ENCODE measurements at regions of chr6 and their contacts with region 1.

Region 1: DNA sequence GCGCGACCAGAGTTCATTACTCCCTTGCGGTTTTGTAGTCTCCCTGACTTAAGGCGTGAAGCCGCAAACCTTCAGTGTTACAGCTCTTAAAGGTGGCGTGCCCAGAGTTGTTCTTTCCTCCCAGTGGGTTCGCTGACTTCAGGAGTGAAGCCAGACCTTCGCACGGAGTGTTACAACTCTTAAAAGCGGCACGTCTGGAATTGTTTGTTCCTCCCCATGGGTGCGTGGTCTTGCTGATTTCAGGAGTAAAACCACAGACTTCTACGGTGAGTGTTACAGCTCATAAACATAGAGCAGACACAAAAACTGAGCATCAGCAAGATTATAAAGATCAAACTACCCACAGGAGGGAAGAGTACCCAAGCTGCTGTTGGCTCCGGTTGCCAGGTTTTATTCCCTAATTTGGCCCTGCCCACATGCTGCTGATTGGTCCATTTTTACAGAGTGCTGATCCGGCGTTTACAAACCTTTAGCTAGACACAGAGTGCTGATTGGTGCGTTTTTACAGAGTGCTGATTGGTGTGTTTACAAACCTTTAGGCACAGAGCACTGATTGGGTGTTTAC is 10.4 kb downstream of the TMEM14C start:
- DNase-seq: peak in 1 of 2 experiments; percentile 35
- H3K4me3 ChIP-seq: no peak overlapping the region
- H3K27ac ChIP-seq: no peak overlapping the region
- H3K4me1 ChIP-seq: no peaks in the 10 kb centered on the region
- H3K27me3 ChIP-seq: no peaks in the 10 kb centered on the region
- CTCF ChIP-seq: no peak
- EP300 ChIP-seq: no peak
- POLR2A ChIP-seq: no peak
- RAD21 ChIP-seq: no peak

Region 2: DNA sequence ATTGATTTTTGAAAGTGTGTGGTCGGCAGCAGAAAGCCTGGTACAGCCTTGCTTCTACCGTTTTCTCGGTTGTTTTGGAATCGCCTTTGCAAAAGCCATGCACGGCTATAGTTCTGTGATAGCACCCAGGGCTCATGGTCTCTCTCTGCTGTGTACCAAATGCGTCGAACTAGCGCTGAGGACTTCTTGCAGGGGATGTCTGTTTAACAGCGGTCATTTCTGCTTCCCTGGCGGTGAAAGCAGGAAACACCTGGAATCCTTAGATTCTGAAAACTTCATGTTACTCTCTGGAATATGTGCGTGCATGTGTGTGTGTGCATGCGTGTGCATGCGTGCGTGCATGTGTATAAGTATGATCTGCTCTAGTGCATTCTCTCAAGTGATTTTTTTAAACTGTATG is 238.2 kb before region 1 on chr6:
- CTCF ChIA-PET with region 1: no interaction called
- POLR2A ChIA-PET with region 1: no interaction called
- DNase-seq: no peak
- H3K4me3 ChIP-seq: no peak overlapping the region
- H3K27ac ChIP-seq: no peak overlapping the region
- H3K4me1 ChIP-seq: no peaks in the 10 kb centered on the region
- H3K27me3 ChIP-seq: no peaks in the 10 kb centered on the region; a peak in 1 of 7 replicates
- CTCF ChIP-seq: no peak
- EP300 ChIP-seq: no peak
- POLR2A ChIP-seq: no peak
- RAD21 ChIP-seq: no peak

Region 3: DNA sequence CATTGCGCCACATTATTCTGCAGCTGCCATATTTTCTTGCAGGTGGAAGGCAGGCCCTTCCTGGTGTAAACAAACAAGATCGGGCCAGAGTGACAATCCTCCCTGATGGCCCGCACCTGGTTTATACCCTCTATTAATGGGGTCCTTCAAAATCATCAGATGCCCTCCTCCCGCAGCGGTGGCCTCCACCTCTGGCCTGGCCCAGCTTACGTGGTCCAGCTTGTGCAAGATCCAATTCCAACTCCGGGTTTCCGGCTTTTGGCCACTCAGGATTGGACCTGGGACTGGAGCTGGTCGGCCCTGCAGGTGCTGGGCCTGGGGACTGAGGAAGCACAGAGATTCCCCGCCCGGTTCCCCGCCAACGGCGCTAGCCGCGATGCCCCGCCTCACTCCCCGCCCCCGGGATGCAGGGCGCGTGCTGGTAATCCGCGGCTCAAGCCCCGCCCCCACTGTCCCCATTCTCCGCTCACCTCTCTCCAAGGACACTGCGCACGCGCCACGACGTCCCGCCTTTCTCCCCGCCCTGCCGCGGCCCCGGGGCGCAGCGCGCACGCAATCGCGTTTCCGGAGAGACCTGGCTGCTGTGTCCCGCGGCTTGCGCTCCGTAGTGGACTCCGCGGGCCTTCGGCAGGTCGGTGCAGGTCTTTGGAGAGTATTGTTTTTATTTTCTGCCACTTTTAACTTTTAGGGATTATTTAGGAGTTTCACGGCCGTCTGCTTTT is 14.2 kb after region 1 on chr6 and contains the start of gene TMEM14B:
- CTCF ChIA-PET with region 1: interaction called, 5 read pairs
- POLR2A ChIA-PET with region 1: interaction called, 22 read pairs
- DNase-seq: peak; percentile 95 to 100
- H3K4me3 ChIP-seq: peak within 1 kb of the TSS; percentile 54 to 91 (median 84)
- H3K27ac ChIP-seq: peak within 1 kb of the TSS; percentile 21; the same call in 1 of the 2 replicates
- H3K4me1 ChIP-seq: peaks cover 0 to 8% (median 1%) of the 10 kb centered on the region in 4 experiments; a peak in 2 of 7 replicates
- H3K27me3 ChIP-seq: no peaks in the 10 kb centered on the region; a peak in 1 of 7 replicates
- CTCF ChIP-seq: no peak
- EP300 ChIP-seq: no peak
- POLR2A ChIP-seq: peak; percentile 67 to 87
- RAD21 ChIP-seq: no peak; a peak in 1 of 4 replicates
- total RNA-seq, gene TMEM14B: 83.8 and 84.6 TPM in 2 replicates